Ascending aorta (tissue), 2 donors: ENCODE measurements at regions of chr11 and their contacts with region 1.

Region 1: GRCh38 chr11:91673705-91674104 is 550.9 kb upstream of the FAT3 start:
- DNase-seq: no peak
- H3K4me3 ChIP-seq: no peak overlapping the region
- H3K27ac ChIP-seq: no peak overlapping the region
- H3K4me1 ChIP-seq: no peaks in the 10 kb centered on the region
- H3K27me3 ChIP-seq: no peaks in the 10 kb centered on the region
- CTCF ChIP-seq: no peak

Region 2: DNA sequence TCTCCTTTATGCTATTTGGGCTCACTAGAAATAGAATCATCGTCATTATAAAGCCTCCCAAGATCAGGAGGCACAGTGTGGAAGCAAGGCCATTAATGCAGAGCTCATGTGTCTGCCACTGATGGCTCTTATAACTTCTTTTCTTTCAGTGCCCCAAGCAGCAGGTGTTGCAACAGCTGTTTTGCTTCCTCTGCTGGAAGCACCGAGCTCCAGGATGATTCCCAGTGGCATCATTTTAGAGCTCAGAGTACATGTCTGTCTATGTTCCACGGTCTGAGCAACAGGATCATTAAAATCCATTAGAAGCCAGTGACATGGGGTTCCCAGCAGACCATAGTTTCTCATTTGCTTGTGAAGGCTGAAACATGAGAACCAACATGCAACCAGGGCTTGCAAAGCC is 252.1 kb before region 1 on chr11:
- intact Hi-C with region 1: loop called (anchors 5 kb)
- DNase-seq: no peak
- H3K4me3 ChIP-seq: no peak overlapping the region
- H3K27ac ChIP-seq: no peak overlapping the region
- H3K4me1 ChIP-seq: no peaks in the 10 kb centered on the region
- H3K27me3 ChIP-seq: no peaks in the 10 kb centered on the region
- CTCF ChIP-seq: no peak